Right ventricle myocardium superior (tissue), 1 donor: ENCODE measurements at regions of chr6 and their contacts with region 1.

Region 1: DNA sequence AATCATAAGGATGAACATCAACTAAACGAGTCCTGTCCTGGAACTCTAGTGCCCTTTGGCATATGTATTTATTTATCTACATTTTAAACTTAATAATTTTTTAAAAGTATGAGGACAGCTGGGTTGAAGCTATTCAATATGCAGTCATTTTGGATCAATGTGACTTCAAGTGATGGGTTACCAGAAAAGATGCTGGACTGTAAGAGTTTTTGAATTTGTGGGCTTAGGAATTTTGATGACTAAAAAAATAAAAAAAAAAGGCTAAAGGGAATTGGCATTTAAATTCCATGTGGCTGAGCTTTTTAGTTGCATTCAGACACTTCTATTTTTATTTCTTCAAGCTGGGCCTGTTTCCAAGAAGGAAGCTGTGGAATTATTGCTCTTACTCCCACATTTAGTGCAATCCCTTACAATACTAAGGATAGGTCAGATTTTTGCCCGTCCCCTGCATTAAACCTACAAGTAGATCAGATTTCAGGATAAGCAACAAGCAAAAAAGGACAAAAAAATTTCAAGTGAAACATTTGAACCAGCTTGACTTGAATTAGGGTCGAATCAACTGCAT is 704.2 kb upstream of the CITED2 start:
- DNase-seq: no peak
- ATAC-seq: peak; percentile 65

Region 2: GRCh38 chr6:139375232-139376016 is 703.2 kb before region 1 on chr6:
- intact Hi-C with region 1: loop called (anchors 5 kb)
- DNase-seq: peak; percentile 94
- ATAC-seq: peak; percentile 82

Region 3: GRCh38 chr6:139973669-139974344 is 104.8 kb before region 1 on chr6:
- intact Hi-C with region 1: loop called (anchors 10 kb)
- DNase-seq: no peak
- ATAC-seq: peak; percentile 92

Region 4: GRCh38 chr6:140441256-140441655 is 362.6 kb after region 1 on chr6:
- intact Hi-C with region 1: loop called (anchors 10 kb)
- DNase-seq: peak; percentile 68
- ATAC-seq: peak; percentile 92